Left cardiac atrium (tissue), 4 donors: ENCODE measurements at regions of chr16 and their contacts with region 1.

Region 1: GRCh38 chr16:69286941-69287713 is 24.0 kb upstream of the VPS4A start:
- DNase-seq: peak; percentile 74
- ATAC-seq: peak; percentile 68 to 78

Region 2: DNA sequence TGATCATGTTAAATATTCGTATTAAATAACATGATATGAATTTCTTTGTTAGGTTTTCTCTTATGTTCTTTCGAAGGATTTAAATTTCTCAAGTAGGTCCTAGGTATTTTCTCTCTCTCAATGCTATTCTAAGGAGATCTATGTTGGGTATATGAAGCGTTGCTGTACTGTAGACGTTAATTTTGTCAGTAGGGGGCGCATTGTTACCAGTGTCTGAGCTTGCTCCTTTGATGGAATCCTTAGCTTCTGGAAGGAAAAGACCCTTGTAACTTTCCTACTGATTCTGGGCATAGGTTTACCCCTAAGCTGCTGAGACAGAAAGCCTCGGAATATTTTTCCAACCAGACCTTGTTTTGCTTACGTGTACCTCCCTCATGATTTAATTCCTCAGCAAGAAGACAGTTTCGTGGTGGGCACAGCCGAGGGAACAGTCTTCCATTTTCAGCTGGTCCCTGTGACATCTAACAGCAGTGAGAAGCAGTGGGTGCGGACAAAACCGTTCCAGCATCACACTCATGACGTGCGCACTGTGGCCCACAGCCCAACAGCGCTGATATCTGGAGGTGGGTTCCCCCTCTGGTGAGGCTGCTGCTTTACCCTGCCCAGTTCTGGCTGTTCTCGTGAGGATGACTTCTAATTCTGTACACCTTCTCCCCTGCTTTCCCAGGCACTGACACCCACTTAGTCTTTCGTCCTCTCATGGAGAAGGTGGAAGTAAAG is 136.8 kb before region 1 on chr16:
- intact Hi-C with region 1: loop called (anchors 1 to 5 kb)
- DNase-seq: no peak
- ATAC-seq: peak; percentile 87 to 91

Region 3: GRCh38 chr16:69190598-69190997 is 96.5 kb before region 1 on chr16:
- intact Hi-C with region 1: loop called in 1 of 2 experiments (anchors 10 kb)
- DNase-seq: no peak
- ATAC-seq: no peak

Region 4: DNA sequence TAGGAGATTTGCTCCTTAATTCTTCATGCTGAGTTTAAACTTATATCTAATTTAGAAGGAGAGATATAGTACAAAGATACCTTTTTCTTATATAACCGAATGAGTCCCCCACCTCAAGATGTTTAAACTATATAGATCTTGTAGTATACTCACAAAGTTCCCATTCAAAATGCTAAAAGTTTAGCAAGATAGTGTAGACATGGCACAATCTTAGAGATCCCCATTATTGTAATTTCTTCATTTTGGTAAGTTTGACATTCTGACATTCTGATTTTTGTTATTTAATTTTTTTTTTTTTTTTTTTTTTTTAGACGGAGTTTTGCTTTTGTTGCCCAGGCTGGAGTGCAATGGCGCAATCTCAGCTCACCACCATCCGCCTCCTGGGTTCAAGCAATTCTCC is 77.4 kb before region 1 on chr16:
- intact Hi-C with region 1: no loop called
- DNase-seq: no peak
- ATAC-seq: no peak